Transverse colon (tissue), 4 donors: ENCODE measurements at regions of chr3 and their contacts with region 1.

Region 1: GRCh38 chr3:128426128-128426921 is 40.4 kb downstream of the DNAJB8 start:
- DNase-seq: peak; percentile 28
- H3K4me3 ChIP-seq: peak overlapping the region in 2 of 4 donors; percentile 13 to 38
- H3K27ac ChIP-seq: no peak overlapping the region
- H3K4me1 ChIP-seq: peaks cover 3 to 10% (median 5%) of the 10 kb centered on the region in 4 donors
- H3K27me3 ChIP-seq: peaks cover 37% of the 10 kb centered on the region
- CTCF ChIP-seq: peak; percentile 58 to 89 (median 79)
- EP300 ChIP-seq: no peak
- POLR2A ChIP-seq: no peak

Region 2: GRCh38 chr3:127083778-127084670 is 1342.3 kb before region 1 on chr3:
- in situ Hi-C with region 1: no loop called
- intact Hi-C with region 1: no loop called
- DNase-seq: no peak
- H3K4me3 ChIP-seq: no peak overlapping the region
- H3K27ac ChIP-seq: no peak overlapping the region
- H3K4me1 ChIP-seq: no peaks in the 10 kb centered on the region
- H3K27me3 ChIP-seq: no peaks in the 10 kb centered on the region
- CTCF ChIP-seq: no peak
- EP300 ChIP-seq: no peak
- POLR2A ChIP-seq: no peak

Region 3: GRCh38 chr3:128590948-128591347 is 164.6 kb after region 1 on chr3:
- in situ Hi-C with region 1: loop called in 2 of 4 experiments (anchors 10 kb)
- intact Hi-C with region 1: no loop called
- DNase-seq: no peak
- H3K4me3 ChIP-seq: no peak overlapping the region
- H3K27ac ChIP-seq: no peak overlapping the region
- H3K4me1 ChIP-seq: no peaks in the 10 kb centered on the region
- H3K27me3 ChIP-seq: peaks cover 5% of the 10 kb centered on the region
- CTCF ChIP-seq: no peak
- EP300 ChIP-seq: no peak
- POLR2A ChIP-seq: no peak

Region 4: GRCh38 chr3:128607710-128608048 is 181.4 kb after region 1 on chr3:
- in situ Hi-C with region 1: loop called in 1 of 4 experiments (anchors 10 kb)
- intact Hi-C with region 1: loop called (anchors 2 kb)
- DNase-seq: no peak
- H3K4me3 ChIP-seq: peak overlapping the region in 3 of 4 donors; percentile 30 to 70 (median 54)
- H3K27ac ChIP-seq: peak overlapping the region in 3 of 4 donors; percentile 37 to 68 (median 59)
- H3K4me1 ChIP-seq: peaks cover 0 to 13% (median 7%) of the 10 kb centered on the region in 4 donors
- H3K27me3 ChIP-seq: no peaks in the 10 kb centered on the region
- CTCF ChIP-seq: no peak
- EP300 ChIP-seq: no peak
- POLR2A ChIP-seq: no peak